HCT116 (cell line): ENCODE measurements at regions of chr16 and their contacts with region 1.

Region 1: GRCh38 chr16:77767211-77767610 is 21.2 kb upstream of the VAT1L start:
- DNase-seq: no peak
- ATAC-seq: no peak
- H3K4me3 ChIP-seq: no peak overlapping the region
- H3K27ac ChIP-seq: no peak overlapping the region
- H3K4me1 ChIP-seq: peaks cover 0 to 5% of the 10 kb centered on the region in 2 experiments; a peak in 2 of 4 replicates
- H3K27me3 ChIP-seq: peaks cover 31% of the 10 kb centered on the region
- CTCF ChIP-seq: no peak
- POLR2A ChIP-seq: no peak
- RAD21 ChIP-seq: no peak

Region 2: GRCh38 chr16:77715145-77715544 is 52.1 kb before region 1 on chr16:
- CTCF ChIA-PET with region 1: no interaction called
- POLR2A ChIA-PET with region 1: no interaction called
- RAD21 ChIA-PET with region 1: no interaction called
- intact Hi-C with region 1: loop called (anchors 5 kb)
- DNase-seq: no peak
- ATAC-seq: no peak
- H3K4me3 ChIP-seq: no peak overlapping the region
- H3K27ac ChIP-seq: no peak overlapping the region
- H3K4me1 ChIP-seq: no peaks in the 10 kb centered on the region
- H3K27me3 ChIP-seq: peaks cover 15% of the 10 kb centered on the region; the same call in 1 of the 2 replicates
- CTCF ChIP-seq: no peak
- POLR2A ChIP-seq: no peak
- RAD21 ChIP-seq: no peak

Region 3: GRCh38 chr16:77863250-77863649 is 96.0 kb after region 1 on chr16:
- CTCF ChIA-PET with region 1: no interaction called
- POLR2A ChIA-PET with region 1: no interaction called
- RAD21 ChIA-PET with region 1: no interaction called
- intact Hi-C with region 1: no loop called
- DNase-seq: no peak
- ATAC-seq: no peak
- H3K4me3 ChIP-seq: no peak overlapping the region
- H3K27ac ChIP-seq: no peak overlapping the region
- H3K4me1 ChIP-seq: no peaks in the 10 kb centered on the region
- H3K27me3 ChIP-seq: peaks cover 70% of the 10 kb centered on the region
- CTCF ChIP-seq: no peak
- POLR2A ChIP-seq: no peak
- RAD21 ChIP-seq: no peak